Heart right ventricle (tissue), 16 donors: ENCODE measurements at regions of chr5 and their contacts with region 1.

Region 1: GRCh38 chr5:32027717-32028321 is 146.3 kb downstream of the GOLPH3 start:
- DNase-seq: peak in 1 of 2 donors; percentile 82
- ATAC-seq: peak; percentile 88 to 96 (median 93)
- H3K4me3 ChIP-seq: peak overlapping the region in 3 of 10 donors; percentile 11 to 19 (median 16)
- H3K27ac ChIP-seq: peak overlapping the region; percentile 63 to 87 (median 76)
- H3K4me1 ChIP-seq: peaks cover 2 to 73% (median 65%) of the 10 kb centered on the region in 9 donors
- H3K27me3 ChIP-seq: no peaks in the 10 kb centered on the region
- CTCF ChIP-seq: no peak

Region 2: DNA sequence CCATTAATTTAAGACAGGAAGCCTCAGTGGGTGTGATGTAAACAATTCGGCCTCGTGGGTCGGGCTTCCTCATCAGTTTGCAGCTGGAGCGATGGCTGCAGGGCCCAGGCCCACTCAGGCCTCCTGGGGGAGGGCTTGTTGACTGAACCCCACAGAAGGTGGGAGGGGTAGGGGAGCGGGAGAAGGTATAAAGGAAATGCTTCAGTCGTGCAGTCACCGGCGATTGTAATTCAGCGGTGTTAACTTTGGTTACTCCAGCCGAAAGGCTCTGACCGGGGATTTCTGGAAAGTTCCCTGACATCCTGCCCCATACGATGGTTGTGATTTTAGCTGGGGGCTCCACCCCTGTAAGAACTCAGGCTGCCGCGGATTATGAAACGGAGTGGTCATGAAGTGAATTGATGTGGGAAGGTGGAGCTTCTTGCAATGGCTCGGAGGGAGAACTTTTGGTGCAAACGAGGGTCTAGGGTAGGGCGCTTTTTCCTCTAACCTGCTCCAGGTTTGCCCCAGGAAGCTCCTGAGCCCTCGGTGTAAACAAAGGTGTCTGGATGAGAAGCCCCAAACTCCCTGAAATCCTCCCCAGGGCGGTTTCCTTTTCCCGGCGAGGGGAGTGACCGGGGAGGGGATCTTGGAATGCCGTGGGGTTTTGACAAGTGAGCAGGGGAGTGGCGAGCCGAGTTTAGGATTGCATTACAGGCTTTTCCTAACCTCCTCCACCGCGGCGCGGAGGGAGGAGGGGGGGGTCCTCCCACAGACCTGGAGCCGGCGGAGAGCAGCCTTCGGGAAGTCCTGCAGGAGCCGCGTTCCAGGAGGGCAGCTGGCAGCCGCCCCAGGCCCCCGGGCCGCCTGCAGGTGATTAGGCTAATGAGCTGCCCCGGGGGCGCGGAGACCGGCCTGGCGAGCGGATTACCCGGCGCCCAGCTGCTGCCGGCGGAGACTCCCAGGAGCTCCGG is 173.4 kb before region 1 on chr5:
- intact Hi-C with region 1: loop called in 3 of 10 experiments (anchors 1 to 5 kb)
- DNase-seq: peak; percentile 60 to 65
- ATAC-seq: peak; percentile 77 to 87 (median 82)
- H3K4me3 ChIP-seq: peak overlapping the region; percentile 42 to 81 (median 65)
- H3K27ac ChIP-seq: peak overlapping the region; percentile 63 to 91 (median 82)
- H3K4me1 ChIP-seq: peaks cover 0 to 72% (median 27%) of the 10 kb centered on the region in 9 donors
- H3K27me3 ChIP-seq: peaks cover 0 to 30% (median 0%) of the 10 kb centered on the region in 7 donors
- CTCF ChIP-seq: no peak